ENCODE measurements at regions of chr7 and their contacts with region 1.

Region 1: GRCh38 chr7:3300651-3301378 is at the start of gene SDK1:
- DNase-seq: peak; percentile 80
- H3K4me3 ChIP-seq: peak within 1 kb of the TSS in 2 of 3 experiments; percentile 27 to 42
- H3K27ac ChIP-seq: no peak within 1 kb of the TSS
- H3K4me1 ChIP-seq: peaks cover 6% of the 10 kb centered on the region
- H3K27me3 ChIP-seq: peaks cover 11% of the 10 kb centered on the region
- CTCF ChIP-seq: peak; percentile 45 to 74
- total RNA-seq, gene SDK1: 4.0 to 24.5 TPM

Region 2: DNA sequence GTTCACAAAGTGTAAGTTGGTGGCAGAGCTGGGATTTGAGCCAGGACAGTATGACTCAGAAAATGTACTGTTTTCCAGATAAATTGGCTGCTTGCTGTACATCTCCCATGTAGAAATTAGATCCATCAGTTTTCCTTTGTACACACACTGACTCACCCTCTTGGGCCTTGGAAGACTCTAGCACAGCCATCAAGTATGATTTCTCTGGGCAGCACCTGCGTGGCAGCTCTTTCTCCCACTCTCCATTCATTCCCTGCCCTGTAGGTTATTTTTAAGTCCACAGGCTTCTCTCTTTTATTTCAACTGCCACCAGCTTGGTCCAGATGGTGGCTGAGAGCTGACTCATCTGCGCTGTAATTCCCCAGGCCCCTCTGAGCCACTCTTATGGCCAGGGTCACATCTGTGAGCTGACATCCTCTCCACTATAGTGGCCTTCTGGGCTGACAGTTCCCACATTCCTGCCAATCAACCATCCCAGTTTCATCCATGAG is 28.1 kb before region 1 on chr7:
- CTCF ChIA-PET with region 1: no interaction called
- dilution Hi-C with region 1: no loop called
- in situ Hi-C with region 1: no loop called
- intact Hi-C with region 1: no loop called
- DNase-seq: peak; percentile 57
- H3K4me3 ChIP-seq: no peak overlapping the region
- H3K27ac ChIP-seq: no peak overlapping the region
- H3K4me1 ChIP-seq: no peaks in the 10 kb centered on the region
- H3K27me3 ChIP-seq: no peaks in the 10 kb centered on the region
- CTCF ChIP-seq: no peak

Region 3: DNA sequence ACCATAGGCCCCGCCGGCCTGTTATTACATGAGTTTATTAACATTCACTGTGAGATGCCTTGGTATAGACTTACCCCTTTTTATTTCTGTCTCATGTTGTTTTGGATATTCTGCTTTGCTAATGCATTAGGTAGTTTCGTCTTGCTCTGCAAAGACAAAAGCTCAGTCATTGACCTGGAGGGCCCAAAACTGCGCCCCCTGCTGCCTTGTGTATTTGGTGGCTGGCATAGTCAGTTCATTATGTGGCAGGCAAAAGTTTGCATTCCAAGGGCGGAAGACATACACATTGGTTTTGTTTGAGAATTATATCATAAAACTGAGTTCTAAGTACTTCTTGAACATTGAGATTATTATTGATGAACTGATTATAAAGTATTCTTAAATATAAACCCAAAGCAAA is 372.7 kb after region 1 on chr7:
- CTCF ChIA-PET with region 1: interaction called, 4 read pairs
- dilution Hi-C with region 1: no loop called
- in situ Hi-C with region 1: no loop called
- intact Hi-C with region 1: loop called (anchors 1 kb)
- DNase-seq: no peak
- H3K4me3 ChIP-seq: no peak overlapping the region
- H3K27ac ChIP-seq: no peak overlapping the region
- H3K4me1 ChIP-seq: no peaks in the 10 kb centered on the region
- H3K27me3 ChIP-seq: no peaks in the 10 kb centered on the region
- CTCF ChIP-seq: peak in 1 of 2 donors; percentile 14

Region 4: DNA sequence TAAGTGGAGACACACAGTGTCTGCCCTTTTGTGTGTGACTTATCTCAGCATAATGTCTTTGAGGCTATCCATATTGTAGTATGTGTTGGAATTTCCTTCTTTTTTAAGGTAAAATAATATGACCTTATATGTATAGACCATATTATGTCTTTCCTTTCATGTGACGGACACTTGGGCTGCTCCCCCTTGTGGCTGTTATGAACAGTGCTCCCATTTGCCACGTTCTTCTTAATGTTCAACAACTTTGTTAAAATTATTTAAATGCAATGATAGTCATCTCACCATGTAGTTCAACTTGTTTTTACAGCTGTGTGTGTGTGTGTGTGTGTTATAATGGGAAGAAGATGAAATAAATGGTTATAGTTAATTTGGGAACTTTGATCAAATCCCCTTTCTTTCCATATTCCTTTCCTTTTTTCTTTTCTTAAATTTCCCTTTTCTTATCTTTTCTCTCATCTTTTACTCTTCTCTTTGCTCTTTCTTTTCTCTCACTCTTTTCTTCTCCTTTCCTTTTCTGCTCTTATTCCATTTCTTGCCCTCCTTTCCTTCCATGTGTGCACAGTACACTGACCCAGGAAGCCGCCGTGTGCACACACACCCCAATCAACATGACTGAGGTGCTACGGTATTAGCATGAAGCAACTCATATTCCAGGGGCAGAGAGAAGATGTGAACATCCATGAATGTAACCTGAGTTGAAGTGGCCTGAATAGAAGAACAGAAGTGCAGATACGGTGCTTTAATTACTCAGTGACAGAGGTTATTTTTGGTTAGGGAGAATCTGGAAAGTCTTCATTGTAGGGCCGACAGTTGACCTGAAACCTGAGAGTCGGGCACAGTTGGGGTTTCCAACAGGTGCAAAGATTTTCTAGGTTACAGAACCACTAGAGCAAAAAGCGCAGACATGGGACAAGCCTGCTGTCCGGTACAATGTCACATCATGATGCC is 596.9 kb after region 1 on chr7:
- CTCF ChIA-PET with region 1: no interaction called
- dilution Hi-C with region 1: no loop called
- in situ Hi-C with region 1: no loop called
- intact Hi-C with region 1: loop called (anchors 2 kb)
- DNase-seq: peak; percentile 19
- H3K4me3 ChIP-seq: no peak overlapping the region
- H3K27ac ChIP-seq: no peak overlapping the region
- H3K4me1 ChIP-seq: no peaks in the 10 kb centered on the region
- H3K27me3 ChIP-seq: no peaks in the 10 kb centered on the region
- CTCF ChIP-seq: peak; percentile 62 to 63

Region 5: DNA sequence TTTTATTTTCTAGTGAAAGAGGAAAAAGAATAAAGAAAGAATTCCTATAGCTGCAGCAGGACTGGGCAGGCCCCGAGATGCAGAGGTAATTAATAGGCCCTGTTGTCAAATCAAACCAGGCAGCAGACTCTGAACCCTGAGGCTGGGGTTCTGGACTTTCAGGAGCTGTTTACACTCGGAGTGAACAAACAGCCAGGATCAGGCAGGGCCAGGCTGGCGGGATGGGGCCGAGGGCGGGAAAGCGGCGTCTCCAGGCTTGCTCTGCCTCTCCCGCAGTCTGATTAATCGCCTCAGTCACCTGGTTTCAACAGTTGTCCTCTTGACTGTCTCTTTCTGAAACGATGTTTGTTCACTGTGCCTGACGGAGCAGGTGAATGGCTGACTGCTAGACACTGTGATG is 705.9 kb after region 1 on chr7:
- CTCF ChIA-PET with region 1: no interaction called
- dilution Hi-C with region 1: no loop called
- in situ Hi-C with region 1: no loop called
- intact Hi-C with region 1: loop called (anchors 10 kb)
- DNase-seq: peak; percentile 83
- H3K4me3 ChIP-seq: peak overlapping the region in 1 of 3 experiments; percentile 40
- H3K27ac ChIP-seq: peak overlapping the region; percentile 43
- H3K4me1 ChIP-seq: no peaks in the 10 kb centered on the region
- H3K27me3 ChIP-seq: no peaks in the 10 kb centered on the region
- CTCF ChIP-seq: no peak

Region 6: GRCh38 chr7:4416396-4417056 is 1115.7 kb after region 1 on chr7:
- CTCF ChIA-PET with region 1: no interaction called
- dilution Hi-C with region 1: no loop called
- in situ Hi-C with region 1: no loop called
- intact Hi-C with region 1: loop called (anchors 2 kb)
- DNase-seq: peak; percentile 22
- H3K4me3 ChIP-seq: no peak overlapping the region
- H3K27ac ChIP-seq: no peak overlapping the region
- H3K4me1 ChIP-seq: no peaks in the 10 kb centered on the region
- H3K27me3 ChIP-seq: no peaks in the 10 kb centered on the region
- CTCF ChIP-seq: no peak